Keratinocyte (primary cell): ENCODE measurements at regions of chr7 and their contacts with region 1.

Region 1: DNA sequence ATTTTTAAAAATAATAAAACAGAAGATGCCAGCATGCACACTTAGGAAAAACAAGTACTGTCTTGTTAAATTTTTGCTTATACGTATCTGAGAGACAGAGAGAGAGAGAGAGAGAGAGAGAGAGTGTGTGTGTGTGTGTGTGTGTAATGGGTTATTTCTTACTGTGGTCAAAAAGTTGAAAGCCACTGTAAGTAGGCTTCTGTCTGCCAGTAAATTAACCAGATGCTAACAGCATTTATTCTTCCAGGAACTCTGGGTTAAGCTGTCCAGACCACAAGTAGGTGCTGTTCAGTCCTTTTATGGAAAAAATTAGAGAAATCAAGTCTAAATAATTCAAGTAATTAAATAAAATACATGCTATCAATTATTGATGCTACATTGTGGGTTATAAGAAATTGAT is 39.7 kb downstream of the RNF32 start:
- DNase-seq: no peak
- H3K4me3 ChIP-seq: no peak overlapping the region
- H3K27ac ChIP-seq: no peak overlapping the region
- H3K4me1 ChIP-seq: no peaks in the 10 kb centered on the region
- H3K27me3 ChIP-seq: no peaks in the 10 kb centered on the region
- CTCF ChIP-seq: no peak

Region 2: GRCh38 chr7:155815332-155816191 is 864.7 kb before region 1 on chr7:
- dilution Hi-C with region 1: loop called (anchors 25 kb)
- DNase-seq: no peak
- H3K4me3 ChIP-seq: no peak overlapping the region
- H3K27ac ChIP-seq: no peak overlapping the region
- H3K4me1 ChIP-seq: peaks cover 4% of the 10 kb centered on the region
- H3K27me3 ChIP-seq: peaks cover 41% of the 10 kb centered on the region
- CTCF ChIP-seq: peak; percentile 45 to 93 (median 92)